ENCODE measurements at regions of chr11 and their contacts with region 1.

Region 1: DNA sequence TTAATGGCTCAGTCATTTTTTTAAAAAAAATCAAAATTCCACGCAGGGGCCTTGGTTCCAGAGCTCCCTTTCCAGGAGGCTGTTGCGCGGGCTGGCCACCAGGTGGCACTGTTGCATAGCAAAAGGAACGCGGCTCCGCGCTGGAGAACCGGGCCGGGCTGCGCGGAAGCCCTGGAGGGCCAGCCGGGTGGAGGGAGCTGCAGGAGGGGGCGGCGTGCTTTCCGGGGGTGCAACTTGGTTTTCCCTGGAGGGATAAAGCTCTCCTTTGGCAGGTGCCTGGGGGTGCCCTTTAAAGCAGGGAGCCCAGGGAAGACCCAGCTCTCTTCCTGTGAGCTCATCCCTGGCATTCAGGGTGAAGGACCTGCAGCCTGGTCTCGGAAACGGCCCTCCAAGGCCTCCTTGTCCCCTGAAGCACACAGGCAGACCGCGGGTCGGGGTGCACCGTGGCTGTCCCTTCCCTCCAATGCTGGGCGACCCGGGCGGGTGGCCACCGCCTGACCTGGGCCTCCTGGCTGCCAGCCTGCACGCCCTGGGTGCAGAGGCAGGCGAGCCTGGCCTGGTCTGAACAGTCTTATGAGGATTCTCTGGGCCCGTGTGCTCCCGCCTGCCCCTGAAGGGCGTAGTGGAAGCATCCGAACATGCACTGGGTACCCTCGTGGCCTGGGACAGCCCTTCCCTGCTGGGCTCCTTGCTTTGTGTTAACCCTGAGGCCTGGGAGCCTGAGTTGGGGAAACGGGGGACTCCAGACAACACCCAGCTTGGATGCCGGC is 23.4 kb downstream of the KRTAP5-5 start:
- DNase-seq: peak; percentile 76
- ATAC-seq: peak; percentile 87
- H3K4me3 Mint-ChIP-seq: no peak overlapping the region
- H3K27ac Mint-ChIP-seq: no peak overlapping the region
- H3K4me1 Mint-ChIP-seq: no peaks in the 10 kb centered on the region
- H3K27me3 Mint-ChIP-seq: peaks cover 22% of the 10 kb centered on the region

Region 2: GRCh38 chr11:1640076-1640946 is 12.6 kb before region 1 on chr11:
- CTCF ChIA-PET with region 1: interaction called, 36 read pairs
- DNase-seq: no peak
- ATAC-seq: no peak
- H3K4me3 Mint-ChIP-seq: no peak overlapping the region
- H3K27ac Mint-ChIP-seq: no peak overlapping the region
- H3K4me1 Mint-ChIP-seq: no peaks in the 10 kb centered on the region
- H3K27me3 Mint-ChIP-seq: peaks cover 14% of the 10 kb centered on the region

Region 3: GRCh38 chr11:1772270-1773130 is 119.5 kb after region 1 on chr11:
- CTCF ChIA-PET with region 1: interaction called, 11 read pairs
- DNase-seq: peak; percentile 84
- ATAC-seq: peak; percentile 98
- H3K4me3 Mint-ChIP-seq: peak overlapping the region; percentile 45
- H3K27ac Mint-ChIP-seq: peak overlapping the region; percentile 83
- H3K4me1 Mint-ChIP-seq: peaks cover 53% of the 10 kb centered on the region
- H3K27me3 Mint-ChIP-seq: peaks cover 3% of the 10 kb centered on the region

Region 4: DNA sequence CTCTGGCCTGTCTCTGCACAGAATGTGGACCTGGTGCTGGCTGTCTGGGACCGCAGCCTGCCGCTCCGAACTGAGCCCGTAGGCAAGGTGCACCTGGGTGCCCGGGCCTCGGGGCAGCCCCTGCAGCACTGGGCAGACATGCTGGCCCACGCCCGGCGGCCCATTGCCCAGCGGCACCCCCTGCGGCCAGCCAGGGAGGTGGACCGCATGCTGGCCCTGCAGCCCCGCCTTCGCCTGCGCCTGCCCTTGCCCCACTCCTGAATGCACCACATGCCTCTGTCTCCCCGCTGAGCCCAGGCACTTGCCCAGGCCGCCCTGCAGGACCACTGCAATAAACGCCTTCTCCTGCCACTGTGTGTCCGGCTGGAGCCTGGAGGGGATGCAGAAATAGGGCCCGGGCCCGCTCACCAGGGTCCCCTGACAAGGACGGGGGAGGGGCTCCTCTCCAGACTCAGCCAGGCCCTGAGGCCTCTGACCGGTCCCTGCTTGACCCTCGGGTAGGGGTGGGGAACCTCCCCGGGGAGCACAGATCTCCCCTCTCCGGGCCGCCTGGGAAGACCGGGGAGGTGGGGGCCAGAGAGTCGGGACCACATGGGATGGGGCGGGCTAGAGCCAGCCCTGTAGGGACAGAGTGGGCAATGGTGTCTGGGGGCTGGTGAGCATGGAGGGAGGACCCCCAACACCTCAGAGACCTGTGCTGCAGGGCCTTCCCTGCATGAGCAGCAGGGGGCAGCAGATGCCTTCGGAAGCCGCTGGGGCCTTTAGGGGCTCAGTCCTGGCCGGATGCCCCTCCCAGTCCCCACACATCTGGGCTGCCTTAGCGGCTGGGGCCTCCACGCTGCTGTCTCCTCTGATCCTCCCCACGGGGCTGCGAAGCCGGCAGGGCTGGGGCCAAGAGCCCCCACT is 184.5 kb after region 1 on chr11:
- CTCF ChIA-PET with region 1: interaction called, 71 read pairs
- DNase-seq: peak; percentile 92
- ATAC-seq: peak; percentile 91
- H3K4me3 Mint-ChIP-seq: no peak overlapping the region
- H3K27ac Mint-ChIP-seq: no peak overlapping the region
- H3K4me1 Mint-ChIP-seq: peaks cover 8% of the 10 kb centered on the region
- H3K27me3 Mint-ChIP-seq: peaks cover 7% of the 10 kb centered on the region

Region 5: DNA sequence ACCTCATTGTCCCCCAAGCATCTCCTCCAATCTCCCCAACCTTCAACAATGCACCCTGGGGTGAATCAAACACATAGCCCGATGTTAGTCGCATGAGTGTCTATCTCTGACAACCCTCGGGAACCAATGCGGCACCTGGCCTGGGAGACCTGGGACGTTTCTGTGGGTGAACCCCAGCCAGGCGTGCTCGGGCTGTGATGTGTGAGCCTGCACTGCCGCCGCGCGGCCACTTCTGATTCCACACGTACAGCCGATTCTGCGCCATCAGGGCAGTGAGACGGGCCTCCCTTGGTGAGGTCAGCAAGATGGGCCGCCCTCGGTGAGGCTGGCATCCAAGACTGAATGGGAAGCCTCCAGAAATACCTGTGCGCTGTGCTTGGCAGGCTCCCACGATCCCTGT is 349.9 kb after region 1 on chr11:
- CTCF ChIA-PET with region 1: interaction called, 24 read pairs
- DNase-seq: no peak
- ATAC-seq: peak; percentile 74
- H3K4me3 Mint-ChIP-seq: no peak overlapping the region
- H3K27ac Mint-ChIP-seq: no peak overlapping the region
- H3K4me1 Mint-ChIP-seq: no peaks in the 10 kb centered on the region
- H3K27me3 Mint-ChIP-seq: no peaks in the 10 kb centered on the region

Measured in activated CD8-positive, alpha-beta memory T cell treated with anti-CD3 and anti-CD28 coated beads, Interleukin-2, amount 10 ng/mL, durations not matched to agents 7 days and 5 days (primary cell).